Breast epithelium (tissue), 4 donors: ENCODE measurements at regions of chr11 and their contacts with region 1.

Region 1: GRCh38 chr11:119222308-119222707 is 16.2 kb downstream of the CBL start:
- DNase-seq: no peak
- H3K4me3 ChIP-seq: no peak overlapping the region
- H3K27ac ChIP-seq: no peak overlapping the region
- H3K4me1 ChIP-seq: no peaks in the 10 kb centered on the region
- H3K27me3 ChIP-seq: no peaks in the 10 kb centered on the region
- CTCF ChIP-seq: no peak
- POLR2A ChIP-seq: no peak

Region 2: GRCh38 chr11:119964136-119965025 is 742.1 kb after region 1 on chr11:
- intact Hi-C with region 1: loop called (anchors 10 kb)
- DNase-seq: peak in 1 of 2 donors; percentile 77
- H3K4me3 ChIP-seq: no peak overlapping the region
- H3K27ac ChIP-seq: peak overlapping the region; percentile 40 to 55
- H3K4me1 ChIP-seq: no peaks in the 10 kb centered on the region
- H3K27me3 ChIP-seq: no peaks in the 10 kb centered on the region
- CTCF ChIP-seq: no peak
- POLR2A ChIP-seq: no peak